ENCODE measurements at regions of chr7 and their contacts with region 1.

Region 1: DNA sequence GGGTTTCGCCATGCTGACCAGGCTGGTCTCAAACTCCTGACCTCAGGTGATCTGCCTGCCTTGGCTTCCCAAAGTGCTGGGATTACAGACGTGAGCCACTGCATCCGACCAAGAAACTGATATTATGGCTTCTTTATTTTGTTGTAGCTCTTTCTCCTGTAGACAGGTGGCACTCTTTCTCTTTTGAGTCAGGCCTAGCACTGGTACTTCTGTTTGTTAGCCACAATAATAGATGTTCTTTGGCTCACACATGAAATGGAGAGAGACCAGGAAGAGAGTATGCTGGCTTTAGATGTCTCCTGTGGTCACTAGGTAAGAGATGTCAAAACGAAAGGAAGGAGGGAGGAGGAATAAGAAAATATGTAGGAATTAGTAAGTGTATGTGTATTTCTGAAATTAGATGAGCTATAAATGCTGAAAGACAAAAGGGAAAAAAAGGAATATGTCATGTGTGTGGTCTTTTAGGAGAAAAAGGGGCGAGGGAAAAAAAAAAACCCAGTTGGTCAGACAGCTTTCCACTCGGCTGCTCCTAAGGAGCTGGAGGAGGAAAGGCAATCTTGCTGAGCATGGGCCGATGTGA is 78.7 kb downstream of the CLEC2L start:
- DNase-seq: peak; percentile 42
- ATAC-seq: peak; percentile 55
- H3K4me3 ChIP-seq: no peak overlapping the region
- H3K27ac ChIP-seq: no peak overlapping the region
- H3K4me1 ChIP-seq: peaks cover 2% of the 10 kb centered on the region; the same call in 1 of the 2 replicates
- H3K27me3 ChIP-seq: no peaks in the 10 kb centered on the region
- CTCF ChIP-seq: peak; percentile 50
- POLR2A ChIP-seq: no peak
- RAD21 ChIP-seq: peak; percentile 55

Region 2: GRCh38 chr7:139618482-139619366 is 16.5 kb after region 1 on chr7:
- CTCF ChIA-PET with region 1: interaction called, 10 read pairs
- POLR2A ChIA-PET with region 1: no interaction called
- dilution Hi-C with region 1: no loop called
- in situ Hi-C with region 1: no loop called
- intact Hi-C with region 1: no loop called
- DNase-seq: peak; percentile 41
- ATAC-seq: peak; percentile 54
- H3K4me3 ChIP-seq: no peak overlapping the region
- H3K27ac ChIP-seq: 0 out of 2 replicates have a peak overlapping the region, but pooled peaks have one; percentile 6
- H3K4me1 ChIP-seq: peaks cover 6% of the 10 kb centered on the region
- H3K27me3 ChIP-seq: no peaks in the 10 kb centered on the region
- CTCF ChIP-seq: peak; percentile 48
- POLR2A ChIP-seq: no peak
- RAD21 ChIP-seq: peak; percentile 64

Region 3: GRCh38 chr7:139645572-139646523 is 43.6 kb after region 1 on chr7:
- CTCF ChIA-PET with region 1: no interaction called
- POLR2A ChIA-PET with region 1: no interaction called
- dilution Hi-C with region 1: no loop called
- in situ Hi-C with region 1: no loop called
- intact Hi-C with region 1: no loop called
- DNase-seq: peak; percentile 80
- ATAC-seq: peak; percentile 63
- H3K4me3 ChIP-seq: no peak overlapping the region
- H3K27ac ChIP-seq: no peak overlapping the region
- H3K4me1 ChIP-seq: peaks cover 12% of the 10 kb centered on the region
- H3K27me3 ChIP-seq: no peaks in the 10 kb centered on the region
- CTCF ChIP-seq: peak; percentile 86
- POLR2A ChIP-seq: no peak
- RAD21 ChIP-seq: peak; percentile 92

Measured in IMR-90 (cell line).